ENCODE measurements at regions of chr14 and their contacts with region 1.

Region 1: DNA sequence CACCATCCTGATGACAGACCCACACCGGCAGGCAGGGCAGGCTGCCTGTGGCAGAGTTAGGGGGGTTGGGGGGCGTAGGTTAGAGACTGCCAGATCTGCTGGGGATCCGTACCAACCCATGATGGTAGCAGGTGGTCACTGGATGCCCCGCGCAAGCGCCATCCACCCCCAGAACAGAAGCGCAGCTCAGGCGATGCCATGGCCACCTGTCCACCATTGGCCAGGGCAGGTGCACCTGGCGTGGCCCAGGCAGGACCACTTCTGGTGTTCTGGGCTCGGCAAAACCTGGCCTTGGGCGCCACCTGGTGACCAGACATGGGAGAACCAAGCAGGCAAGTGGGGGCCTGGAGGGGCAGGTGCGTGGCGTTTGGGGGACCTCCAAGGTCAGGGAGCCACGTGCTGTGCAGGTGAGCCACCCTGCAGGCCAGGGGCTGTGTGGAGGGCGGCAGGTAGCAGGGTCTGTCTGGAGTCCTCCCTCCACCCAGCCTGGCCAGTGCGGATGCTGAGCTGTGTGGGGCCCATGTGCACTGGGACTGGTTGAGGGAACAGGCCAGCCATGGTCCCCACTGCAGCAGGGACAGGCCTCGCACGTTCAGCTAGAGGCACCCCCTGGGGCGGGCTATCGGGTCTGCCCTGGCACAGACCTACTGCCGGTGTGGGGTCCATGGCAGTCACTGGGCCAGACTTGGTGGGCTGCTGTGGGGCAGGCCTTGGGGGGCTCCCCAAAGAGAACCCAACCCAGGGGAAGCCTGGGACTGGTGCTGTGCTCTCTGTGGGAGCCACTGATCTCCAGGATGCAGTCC is 15.6 kb downstream of the BAG5 start:
- DNase-seq: peak in 1 of 2 donors; percentile 85
- H3K4me3 ChIP-seq: no peak overlapping the region
- H3K27ac ChIP-seq: peak overlapping the region in 1 of 2 donors; percentile 18
- H3K4me1 ChIP-seq: peaks cover 16 to 85% (median 69%) of the 10 kb centered on the region in 4 donors
- H3K27me3 ChIP-seq: no peaks in the 10 kb centered on the region
- CTCF ChIP-seq: peak; percentile 89 to 97

Region 2: DNA sequence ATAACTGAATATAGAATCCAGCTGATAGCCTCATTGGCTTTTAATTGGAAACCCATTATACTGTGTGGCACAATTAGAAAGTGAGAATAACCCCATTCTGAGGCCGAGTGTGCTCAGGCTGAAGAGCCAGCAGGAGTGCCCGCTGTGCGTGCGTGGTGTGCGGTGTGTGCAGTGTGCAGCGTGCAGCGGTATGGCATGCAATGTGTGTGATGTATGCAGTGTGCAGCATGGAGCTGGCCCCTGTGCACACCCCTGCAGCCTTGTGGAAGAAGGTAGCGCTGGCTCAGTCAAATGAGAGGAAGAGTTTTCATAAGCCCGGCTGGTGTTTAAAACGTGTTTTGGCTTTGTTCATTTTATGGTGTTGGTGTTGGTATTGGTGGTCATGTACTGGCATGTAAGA is 47.1 kb before region 1 on chr14:
- intact Hi-C with region 1: loop called (anchors 10 kb)
- DNase-seq: no peak
- H3K4me3 ChIP-seq: no peak overlapping the region
- H3K27ac ChIP-seq: no peak overlapping the region
- H3K4me1 ChIP-seq: peaks cover 0 to 7% (median 3%) of the 10 kb centered on the region in 4 donors
- H3K27me3 ChIP-seq: no peaks in the 10 kb centered on the region
- CTCF ChIP-seq: no peak

Region 3: DNA sequence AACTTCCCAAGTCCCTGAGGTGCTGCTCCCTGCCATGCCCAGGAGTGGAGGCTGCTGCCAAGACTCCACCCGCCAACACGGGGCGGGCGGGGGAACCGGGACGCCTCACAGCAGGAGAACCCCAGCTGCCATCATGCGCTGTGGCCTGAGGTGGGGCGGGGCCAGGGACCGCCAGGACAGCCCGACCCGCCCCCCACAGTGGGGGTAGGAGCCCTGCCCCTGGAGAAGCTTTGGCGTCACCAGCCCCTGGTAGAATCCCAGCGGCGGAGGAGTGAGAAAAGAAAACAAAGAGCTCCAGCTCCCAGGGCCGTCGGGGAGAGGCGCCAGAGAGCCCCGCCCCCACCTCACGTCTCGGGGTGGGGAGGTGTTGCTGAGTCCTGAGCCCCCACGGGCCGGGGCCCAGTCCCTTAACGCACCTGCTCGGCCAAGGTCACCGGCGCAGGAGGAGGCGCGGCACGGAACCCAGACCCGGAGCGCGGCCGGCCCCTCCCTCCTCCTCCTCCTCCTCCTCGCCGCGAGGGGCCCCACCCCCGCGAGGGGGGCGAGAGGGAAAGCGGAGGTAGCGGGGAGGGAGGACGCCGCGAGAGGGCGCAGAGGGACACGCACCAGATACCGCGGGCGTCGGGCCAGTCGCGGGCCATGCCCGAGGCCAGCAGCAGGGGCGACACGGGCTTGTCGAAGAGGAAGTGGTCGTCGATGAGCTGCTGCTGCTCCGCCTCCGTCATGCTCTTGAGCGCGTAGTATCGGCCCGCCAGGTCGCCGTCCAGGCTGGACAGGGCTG is 26.0 kb before region 1 on chr14:
- intact Hi-C with region 1: loop called (anchors 2 kb)
- DNase-seq: peak; percentile 77 to 94
- H3K4me3 ChIP-seq: peak overlapping the region; percentile 65 to 85
- H3K27ac ChIP-seq: peak overlapping the region; percentile 84 to 90
- H3K4me1 ChIP-seq: peaks cover 0 to 57% (median 47%) of the 10 kb centered on the region in 4 donors
- H3K27me3 ChIP-seq: no peaks in the 10 kb centered on the region
- CTCF ChIP-seq: peak; percentile 59 to 61